ENCODE measurements at regions of chr3 and their contacts with region 1.

Region 1: GRCh38 chr3:115814778-115815380 is 191.6 kb downstream of the GAP43 start:
- DNase-seq: peak; percentile 75
- ATAC-seq: peak; percentile 71
- H3K4me3 Mint-ChIP-seq: no peak overlapping the region
- H3K27ac Mint-ChIP-seq: no peak overlapping the region
- H3K4me1 Mint-ChIP-seq: no peaks in the 10 kb centered on the region
- H3K27me3 Mint-ChIP-seq: peaks cover 16% of the 10 kb centered on the region

Region 2: GRCh38 chr3:115680803-115681345 is 134.0 kb before region 1 on chr3:
- CTCF ChIA-PET with region 1: no interaction called
- POLR2A ChIA-PET with region 1: no interaction called
- DNase-seq: no peak
- ATAC-seq: no peak
- H3K4me3 Mint-ChIP-seq: no peak overlapping the region
- H3K27ac Mint-ChIP-seq: no peak overlapping the region
- H3K4me1 Mint-ChIP-seq: no peaks in the 10 kb centered on the region
- H3K27me3 Mint-ChIP-seq: peaks cover 34% of the 10 kb centered on the region

Region 3: GRCh38 chr3:115728013-115728412 is 86.9 kb before region 1 on chr3:
- CTCF ChIA-PET with region 1: no interaction called
- POLR2A ChIA-PET with region 1: no interaction called
- DNase-seq: no peak
- ATAC-seq: no peak
- H3K4me3 Mint-ChIP-seq: no peak overlapping the region
- H3K27ac Mint-ChIP-seq: no peak overlapping the region
- H3K4me1 Mint-ChIP-seq: no peaks in the 10 kb centered on the region
- H3K27me3 Mint-ChIP-seq: peaks cover 10% of the 10 kb centered on the region

Region 4: GRCh38 chr3:115804722-115805121 is 10.2 kb before region 1 on chr3:
- CTCF ChIA-PET with region 1: interaction called, 11 read pairs
- POLR2A ChIA-PET with region 1: no interaction called
- DNase-seq: no peak
- ATAC-seq: no peak
- H3K4me3 Mint-ChIP-seq: no peak overlapping the region
- H3K27ac Mint-ChIP-seq: no peak overlapping the region
- H3K4me1 Mint-ChIP-seq: no peaks in the 10 kb centered on the region
- H3K27me3 Mint-ChIP-seq: peaks cover 36% of the 10 kb centered on the region

Region 5: GRCh38 chr3:115885621-115886020 is 70.7 kb after region 1 on chr3:
- CTCF ChIA-PET with region 1: no interaction called
- POLR2A ChIA-PET with region 1: no interaction called
- DNase-seq: no peak
- ATAC-seq: no peak
- H3K4me3 Mint-ChIP-seq: no peak overlapping the region
- H3K27ac Mint-ChIP-seq: no peak overlapping the region
- H3K4me1 Mint-ChIP-seq: no peaks in the 10 kb centered on the region
- H3K27me3 Mint-ChIP-seq: no peaks in the 10 kb centered on the region

Measured in activated CD8-positive, alpha-beta T cell treated with anti-CD3 and anti-CD28 coated beads, Interleukin-2, amount 10 ng/mL, durations not matched to agents 7 days and 5 days (primary cell).